B cell (primary cell): ENCODE measurements at regions of chr10 and their contacts with region 1.

Region 1: DNA sequence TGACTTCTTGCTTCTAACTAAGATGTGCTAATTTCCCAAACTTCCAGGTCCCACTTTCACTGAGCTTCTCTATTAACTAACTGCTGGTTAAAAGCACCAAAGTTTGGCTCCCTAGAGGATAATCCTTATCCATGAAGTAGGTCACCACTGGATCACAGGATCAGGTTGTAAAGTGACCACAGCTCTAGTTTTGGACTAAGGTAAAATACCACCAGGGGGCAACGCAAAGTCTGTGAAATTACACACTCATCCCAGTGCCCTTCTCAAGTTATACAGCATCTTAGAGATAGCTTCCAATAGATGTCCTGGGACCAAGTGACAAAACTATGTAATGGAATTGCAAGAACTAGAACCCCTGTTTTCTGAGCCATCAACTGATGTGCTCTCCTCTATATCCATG is 116.4 kb upstream of the ASAH2 start:
- DNase-seq: no peak
- ATAC-seq: no peak
- H3K4me3 ChIP-seq: no peak overlapping the region
- H3K4me3 Mint-ChIP-seq: no peak overlapping the region
- H3K27ac ChIP-seq: no peak overlapping the region
- H3K27ac Mint-ChIP-seq: no peak overlapping the region
- H3K4me1 ChIP-seq: peaks cover 18% of the 10 kb centered on the region in 2 donors
- H3K4me1 Mint-ChIP-seq: peaks cover 25% of the 10 kb centered on the region
- H3K27me3 ChIP-seq: no peaks in the 10 kb centered on the region
- H3K27me3 Mint-ChIP-seq: no peaks in the 10 kb centered on the region
- CTCF ChIP-seq: no peak

Region 2: GRCh38 chr10:50310560-50311174 is 57.1 kb before region 1 on chr10:
- CTCF ChIA-PET with region 1: no interaction called
- POLR2A ChIA-PET with region 1: no interaction called
- intact Hi-C with region 1: loop called (anchors 10 kb)
- DNase-seq: peak; percentile 22
- ATAC-seq: no peak
- H3K4me3 ChIP-seq: no peak overlapping the region
- H3K4me3 Mint-ChIP-seq: no peak overlapping the region
- H3K27ac ChIP-seq: no peak overlapping the region
- H3K27ac Mint-ChIP-seq: no peak overlapping the region
- H3K4me1 ChIP-seq: peaks cover 0 to 4% of the 10 kb centered on the region in 2 donors
- H3K4me1 Mint-ChIP-seq: peaks cover 7% of the 10 kb centered on the region
- H3K27me3 ChIP-seq: no peaks in the 10 kb centered on the region
- H3K27me3 Mint-ChIP-seq: no peaks in the 10 kb centered on the region
- CTCF ChIP-seq: peak; percentile 51

Region 3: GRCh38 chr10:50343702-50344331 is 23.9 kb before region 1 on chr10:
- CTCF ChIA-PET with region 1: no interaction called
- POLR2A ChIA-PET with region 1: no interaction called
- intact Hi-C with region 1: no loop called
- DNase-seq: no peak
- ATAC-seq: no peak
- H3K4me3 ChIP-seq: no peak overlapping the region
- H3K4me3 Mint-ChIP-seq: no peak overlapping the region
- H3K27ac ChIP-seq: no peak overlapping the region
- H3K27ac Mint-ChIP-seq: no peak overlapping the region
- H3K4me1 ChIP-seq: peaks cover 12 to 13% of the 10 kb centered on the region in 2 donors
- H3K4me1 Mint-ChIP-seq: peaks cover 18% of the 10 kb centered on the region
- H3K27me3 ChIP-seq: no peaks in the 10 kb centered on the region
- H3K27me3 Mint-ChIP-seq: no peaks in the 10 kb centered on the region
- CTCF ChIP-seq: no peak

Region 4: GRCh38 chr10:50452603-50453002 is 84.9 kb after region 1 on chr10:
- CTCF ChIA-PET with region 1: no interaction called
- POLR2A ChIA-PET with region 1: no interaction called
- intact Hi-C with region 1: loop called (anchors 10 kb)
- DNase-seq: peak; percentile 58
- ATAC-seq: peak; percentile 72
- H3K4me3 ChIP-seq: no peak overlapping the region
- H3K4me3 Mint-ChIP-seq: peak overlapping the region; percentile 32
- H3K27ac ChIP-seq: peak overlapping the region; percentile 8 to 22
- H3K27ac Mint-ChIP-seq: peak overlapping the region; percentile 33
- H3K4me1 ChIP-seq: peaks cover 19 to 42% of the 10 kb centered on the region in 2 donors
- H3K4me1 Mint-ChIP-seq: peaks cover 57% of the 10 kb centered on the region
- H3K27me3 ChIP-seq: no peaks in the 10 kb centered on the region
- H3K27me3 Mint-ChIP-seq: no peaks in the 10 kb centered on the region
- CTCF ChIP-seq: no peak